ENCODE measurements at regions of chr11 and their contacts with region 1.

Region 1: GRCh38 chr11:112121981-112122615 is 35.4 kb downstream of the SDHD start:
- DNase-seq: peak; percentile 83
- H3K4me3 ChIP-seq: no peak overlapping the region
- H3K27ac ChIP-seq: peak overlapping the region; percentile 97
- H3K4me1 ChIP-seq: peaks cover 30% of the 10 kb centered on the region
- H3K27me3 ChIP-seq: no peaks in the 10 kb centered on the region
- CTCF ChIP-seq: no peak

Region 2: DNA sequence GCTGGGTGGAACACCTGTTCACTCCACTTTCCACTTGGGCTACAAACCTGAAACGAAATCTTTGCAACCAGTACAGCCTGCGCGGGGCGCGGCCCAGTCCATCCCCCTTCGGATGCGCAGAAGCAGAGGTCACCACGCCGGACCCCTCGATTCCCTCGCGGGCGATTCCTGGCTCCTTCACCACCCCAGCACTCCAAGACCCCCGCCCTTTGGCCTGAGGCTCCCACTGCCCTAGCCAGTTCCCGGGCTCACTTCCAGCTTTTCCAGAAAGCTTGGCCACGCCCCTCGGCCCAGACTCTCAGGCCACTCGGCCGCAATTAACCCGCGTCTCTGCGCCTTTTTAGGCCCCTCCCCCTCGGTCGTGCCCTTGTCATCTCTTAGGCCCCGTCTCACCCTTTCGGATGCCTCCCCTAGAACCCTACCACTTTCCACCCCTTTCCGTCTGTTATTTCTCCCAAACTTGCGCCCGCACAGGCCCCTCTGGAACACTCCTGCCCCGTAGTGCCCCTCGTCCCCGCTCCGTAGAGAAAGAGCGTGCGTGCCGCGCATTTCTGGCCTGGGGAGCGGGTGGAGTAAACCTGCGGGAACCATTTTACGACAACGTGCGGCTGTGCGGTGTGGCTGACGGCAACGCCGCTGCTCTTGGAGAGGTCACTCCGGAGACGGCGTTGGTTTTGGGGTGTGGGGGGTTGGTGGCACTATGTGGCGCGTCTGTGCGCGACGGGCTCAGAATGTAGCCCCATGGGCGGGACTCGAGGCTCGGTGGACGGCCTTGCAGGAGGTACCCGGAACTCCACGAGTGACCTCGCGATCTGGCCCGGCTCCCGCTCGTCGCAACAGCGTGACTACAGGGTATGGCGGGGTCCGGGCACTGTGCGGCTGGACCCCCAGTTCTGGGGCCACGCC is 97.1 kb before region 1 on chr11 and contains the start of gene DLAT:
- CTCF ChIA-PET with region 1: no interaction called
- dilution Hi-C with region 1: no loop called
- in situ Hi-C with region 1: no loop called
- intact Hi-C with region 1: no loop called
- DNase-seq: peak; percentile 80
- H3K4me3 ChIP-seq: peak within 1 kb of the TSS; percentile 58 to 90 (median 72)
- H3K27ac ChIP-seq: peak within 1 kb of the TSS; percentile 75
- H3K4me1 ChIP-seq: peaks cover 8% of the 10 kb centered on the region
- H3K27me3 ChIP-seq: no peaks in the 10 kb centered on the region
- CTCF ChIP-seq: no peak
- total RNA-seq, gene DLAT: 38.6 to 42.0 TPM

Region 3: DNA sequence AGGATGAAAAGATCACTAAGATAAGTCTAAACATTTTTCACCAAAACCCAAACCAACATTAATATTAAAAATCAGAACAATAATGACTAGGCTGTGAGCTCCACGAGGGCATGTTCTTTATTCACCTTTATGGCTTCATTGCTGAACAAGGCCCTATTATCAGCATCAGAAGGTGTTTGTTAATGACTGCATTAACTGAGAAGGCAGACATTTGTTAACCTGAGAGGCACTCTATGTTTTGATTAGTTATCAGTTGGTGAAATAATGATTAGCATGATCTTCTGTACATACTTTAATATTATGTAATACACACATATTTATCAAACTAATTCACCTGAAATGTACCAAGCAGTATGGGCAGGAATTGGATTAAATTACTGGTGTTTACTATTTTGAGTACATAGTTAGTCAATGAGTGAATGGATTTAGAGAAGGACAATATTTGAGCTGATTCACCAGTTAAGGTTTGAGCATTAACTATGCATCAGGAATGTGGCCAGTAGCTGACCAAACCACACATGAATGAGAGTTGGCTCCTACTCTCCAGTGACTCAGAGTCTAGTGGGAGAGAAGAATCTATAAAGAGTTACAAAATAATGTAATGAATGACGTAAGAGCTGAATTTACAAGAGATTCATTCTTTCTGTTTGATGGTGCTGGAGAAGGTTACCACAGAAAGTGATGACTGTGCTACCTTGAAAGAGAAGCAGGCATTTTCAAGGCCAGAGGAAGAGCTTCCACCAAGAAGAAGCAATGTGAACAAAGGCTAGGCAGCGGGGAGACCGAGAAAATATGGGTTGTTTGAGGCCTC is 35.1 kb after region 1 on chr11:
- CTCF ChIA-PET with region 1: no interaction called
- dilution Hi-C with region 1: loop called (anchors 5 kb)
- in situ Hi-C with region 1: loop called in 1 of 2 experiments (anchors 10 kb)
- intact Hi-C with region 1: loop called (anchors 2 kb)
- DNase-seq: peak; percentile 100
- H3K4me3 ChIP-seq: no peak overlapping the region
- H3K27ac ChIP-seq: peak overlapping the region; percentile 95
- H3K4me1 ChIP-seq: peaks cover 44% of the 10 kb centered on the region
- H3K27me3 ChIP-seq: no peaks in the 10 kb centered on the region
- CTCF ChIP-seq: no peak

Measured in mammary epithelial cell (primary cell).